Common myeloid progenitor, CD34-positive (primary cell): ENCODE measurements at regions of chr1 and their contacts with region 1.

Region 1: DNA sequence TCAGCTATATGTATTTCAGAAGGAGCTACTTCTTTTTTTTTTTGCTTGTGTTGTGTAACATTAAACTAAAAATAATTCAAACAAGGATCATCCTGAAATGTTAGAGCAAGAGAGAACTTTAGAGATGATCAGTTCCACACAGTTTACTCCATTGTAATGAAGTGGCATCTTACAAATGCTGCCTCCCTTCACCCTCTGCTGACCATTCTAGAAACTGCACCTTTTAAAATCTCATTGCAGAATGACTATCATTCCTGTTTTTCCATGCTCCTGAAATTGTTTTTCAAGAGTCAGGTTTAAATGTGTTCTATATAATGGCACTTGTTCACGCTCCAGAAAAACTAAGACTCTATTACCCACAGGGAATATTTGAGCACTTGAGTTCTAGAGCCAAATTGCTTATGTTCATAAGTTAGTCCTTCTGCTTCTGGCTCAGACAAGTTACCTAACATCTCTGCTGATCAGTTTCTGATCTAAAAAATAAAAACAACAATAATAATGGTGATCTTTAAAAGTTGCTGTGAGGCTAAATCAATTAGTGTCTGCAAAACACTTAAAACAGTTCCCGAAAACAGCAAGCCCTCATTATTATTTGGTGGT is 21.5 kb upstream of the SLC44A5 start:
- DNase-seq: peak; percentile 14 to 30 (median 25)
- H3K4me3 ChIP-seq: no peak overlapping the region
- H3K27ac ChIP-seq: no peak overlapping the region
- H3K4me1 ChIP-seq: no peaks in the 10 kb centered on the region
- H3K27me3 ChIP-seq: peaks cover 0 to 11% (median 2%) of the 10 kb centered on the region in 5 experiments

Region 2: GRCh38 chr1:75548721-75549480 is 83.5 kb before region 1 on chr1:
- CTCF ChIA-PET with region 1: no interaction called
- POLR2A ChIA-PET with region 1: no interaction called
- DNase-seq: no peak
- H3K4me3 ChIP-seq: no peak overlapping the region
- H3K27ac ChIP-seq: no peak overlapping the region
- H3K4me1 ChIP-seq: no peaks in the 10 kb centered on the region
- H3K27me3 ChIP-seq: no peaks in the 10 kb centered on the region

Region 3: GRCh38 chr1:75615613-75616435 is 16.6 kb before region 1 on chr1:
- CTCF ChIA-PET with region 1: interaction called, 21 read pairs
- POLR2A ChIA-PET with region 1: no interaction called
- DNase-seq: peak; percentile 32 to 75 (median 67)
- H3K4me3 ChIP-seq: peak overlapping the region; percentile 20 to 76 (median 58)
- H3K27ac ChIP-seq: no peak overlapping the region
- H3K4me1 ChIP-seq: peaks cover 0 to 25% (median 16%) of the 10 kb centered on the region in 4 experiments
- H3K27me3 ChIP-seq: peaks cover 3 to 76% (median 36%) of the 10 kb centered on the region in 5 experiments

Region 4: DNA sequence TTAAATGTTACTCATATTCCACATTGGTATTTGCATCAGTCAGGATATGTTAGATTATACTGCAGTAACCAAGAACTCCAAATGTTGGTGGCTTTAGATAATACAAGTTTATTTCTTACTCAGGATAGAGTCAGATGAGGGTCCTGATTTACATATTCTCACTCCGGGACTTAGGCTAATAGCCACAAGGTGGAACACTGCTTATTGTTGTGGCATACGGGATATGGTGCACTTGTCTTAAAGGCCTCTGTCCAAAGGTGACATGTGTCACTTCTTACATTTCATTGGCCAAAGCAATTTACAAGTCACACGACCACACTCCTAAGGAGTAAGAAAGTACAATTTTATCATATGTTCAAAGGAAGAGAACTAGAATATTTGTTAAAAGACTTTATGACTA is 63.5 kb after region 1 on chr1:
- CTCF ChIA-PET with region 1: no interaction called
- POLR2A ChIA-PET with region 1: no interaction called
- DNase-seq: no peak
- H3K4me3 ChIP-seq: no peak overlapping the region
- H3K27ac ChIP-seq: no peak overlapping the region
- H3K4me1 ChIP-seq: no peaks in the 10 kb centered on the region
- H3K27me3 ChIP-seq: no peaks in the 10 kb centered on the region

Region 5: DNA sequence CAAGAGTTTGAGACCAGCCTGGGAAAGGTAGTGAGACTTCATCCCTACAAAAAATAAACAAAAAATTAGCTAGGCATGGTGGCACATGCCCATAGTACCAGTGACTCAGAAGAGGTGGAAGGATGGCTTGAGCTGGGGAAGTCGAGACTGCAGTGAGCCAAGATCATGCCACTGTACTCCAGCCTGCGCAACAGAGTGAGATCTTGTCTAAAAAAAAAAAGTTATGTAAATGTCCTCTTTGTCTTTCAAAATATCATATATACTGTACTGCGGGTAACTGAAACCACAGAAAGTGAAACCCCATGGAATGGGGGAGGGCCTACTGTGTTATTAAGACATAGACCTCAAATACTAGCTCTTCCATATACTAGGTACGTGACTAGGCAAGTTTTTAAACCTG is 112.8 kb after region 1 on chr1:
- CTCF ChIA-PET with region 1: no interaction called
- POLR2A ChIA-PET with region 1: no interaction called
- DNase-seq: peak in 2 of 3 donors; percentile 30 to 36
- H3K4me3 ChIP-seq: no peak overlapping the region
- H3K27ac ChIP-seq: no peak overlapping the region
- H3K4me1 ChIP-seq: peaks cover 0 to 5% (median 0%) of the 10 kb centered on the region in 4 experiments
- H3K27me3 ChIP-seq: no peaks in the 10 kb centered on the region